ENCODE measurements at regions of chr2 and their contacts with region 1.

Region 1: GRCh38 chr2:88831792-88832248 is 140.3 kb downstream of the RPIA start:
- DNase-seq: peak; percentile 77
- ATAC-seq: peak; percentile 78
- H3K4me3 Mint-ChIP-seq: no peak overlapping the region
- H3K27ac Mint-ChIP-seq: no peak overlapping the region
- H3K4me1 Mint-ChIP-seq: no peaks in the 10 kb centered on the region
- H3K27me3 Mint-ChIP-seq: peaks cover 6% of the 10 kb centered on the region

Region 2: DNA sequence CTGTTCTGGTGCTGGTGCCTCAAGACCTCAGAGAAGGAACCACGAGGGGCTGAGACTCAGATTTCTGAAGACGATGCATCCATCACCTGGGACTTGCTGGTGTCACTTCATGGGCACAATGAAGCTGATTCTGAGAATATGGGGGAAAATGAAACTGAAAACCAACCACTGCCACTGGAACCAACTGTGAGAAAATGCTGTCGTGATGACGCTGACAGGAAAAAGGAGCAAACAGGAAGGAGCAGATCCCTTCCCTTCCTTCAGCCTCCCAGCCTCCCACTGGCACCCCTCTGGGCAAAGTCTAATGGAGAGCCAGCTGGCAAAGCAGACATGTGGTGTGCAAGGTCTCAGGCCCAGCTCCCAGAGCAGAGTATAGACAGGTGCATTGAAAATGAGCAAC is 489.1 kb before region 1 on chr2:
- CTCF ChIA-PET with region 1: no interaction called
- POLR2A ChIA-PET with region 1: no interaction called
- intact Hi-C with region 1: no loop called
- DNase-seq: no peak
- ATAC-seq: no peak
- H3K4me3 Mint-ChIP-seq: no peak overlapping the region
- H3K27ac Mint-ChIP-seq: no peak overlapping the region
- H3K4me1 Mint-ChIP-seq: peaks cover 4% of the 10 kb centered on the region
- H3K27me3 Mint-ChIP-seq: peaks cover 17% of the 10 kb centered on the region

Region 3: DNA sequence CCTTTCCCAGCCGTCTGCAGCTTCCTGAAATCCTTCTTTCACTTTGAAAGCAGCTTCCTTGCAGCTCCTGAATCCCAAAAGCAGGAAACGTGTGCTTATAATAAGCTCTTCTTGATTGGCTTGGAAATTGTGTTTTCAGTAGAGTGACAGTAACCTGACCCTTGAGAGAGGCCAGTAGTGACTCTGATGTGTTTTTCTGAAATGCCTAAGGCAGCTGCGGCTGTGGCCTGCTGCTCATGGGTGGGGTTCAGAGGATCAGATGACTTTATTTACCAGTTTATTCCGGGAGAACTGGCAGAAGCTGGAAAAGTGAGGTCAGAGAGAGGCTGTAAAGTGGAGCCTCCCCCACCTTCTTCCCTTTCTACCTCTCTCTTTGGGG is 172.3 kb before region 1 on chr2:
- CTCF ChIA-PET with region 1: no interaction called
- POLR2A ChIA-PET with region 1: no interaction called
- intact Hi-C with region 1: no loop called
- DNase-seq: no peak
- ATAC-seq: no peak
- H3K4me3 Mint-ChIP-seq: no peak overlapping the region
- H3K27ac Mint-ChIP-seq: no peak overlapping the region
- H3K4me1 Mint-ChIP-seq: no peaks in the 10 kb centered on the region
- H3K27me3 Mint-ChIP-seq: no peaks in the 10 kb centered on the region

Region 4: GRCh38 chr2:88713408-88713807 is 118.4 kb before region 1 on chr2:
- CTCF ChIA-PET with region 1: no interaction called
- POLR2A ChIA-PET with region 1: no interaction called
- intact Hi-C with region 1: no loop called
- DNase-seq: no peak
- ATAC-seq: no peak
- H3K4me3 Mint-ChIP-seq: no peak overlapping the region
- H3K27ac Mint-ChIP-seq: no peak overlapping the region
- H3K4me1 Mint-ChIP-seq: no peaks in the 10 kb centered on the region
- H3K27me3 Mint-ChIP-seq: no peaks in the 10 kb centered on the region

Region 5: DNA sequence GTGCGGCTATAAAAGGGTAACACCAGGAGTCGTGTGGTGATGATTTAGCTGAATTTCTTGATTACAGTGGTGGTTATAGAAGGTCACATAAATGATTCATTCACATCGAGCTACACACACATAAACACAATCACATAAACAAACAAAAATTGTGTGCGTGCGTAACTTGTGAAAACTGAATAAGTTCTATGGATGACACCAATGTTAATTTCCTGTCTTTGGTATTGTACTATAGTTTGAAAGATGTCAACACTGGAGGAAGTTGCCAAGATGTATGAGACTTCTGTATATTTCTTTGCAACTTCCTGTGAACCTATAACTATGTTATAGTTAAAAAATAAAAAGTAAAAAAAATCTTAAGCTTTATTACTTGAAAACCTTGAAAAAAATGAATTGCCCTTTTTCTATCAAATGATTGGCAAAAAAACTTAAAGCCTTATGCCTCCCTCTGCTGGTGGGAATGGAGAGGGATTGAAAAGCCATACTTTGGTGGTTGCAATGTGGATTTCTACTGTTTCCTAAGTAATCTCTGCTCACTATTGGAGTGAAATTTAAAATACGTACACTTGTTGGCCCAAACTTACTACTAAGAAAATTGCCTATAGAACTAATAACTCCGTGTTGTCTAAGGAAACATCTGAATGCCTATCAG is 87.4 kb after region 1 on chr2:
- CTCF ChIA-PET with region 1: interaction called, 7 read pairs
- POLR2A ChIA-PET with region 1: no interaction called
- intact Hi-C with region 1: loop called in 1 of 2 experiments (anchors 5 kb)
- DNase-seq: peak; percentile 17
- ATAC-seq: no peak
- H3K4me3 Mint-ChIP-seq: no peak overlapping the region
- H3K27ac Mint-ChIP-seq: no peak overlapping the region
- H3K4me1 Mint-ChIP-seq: peaks cover 1% of the 10 kb centered on the region
- H3K27me3 Mint-ChIP-seq: peaks cover 5% of the 10 kb centered on the region

Measured in activated CD4-positive, alpha-beta T cell treated with anti-CD3 and anti-CD28 coated beads for 36 hours (primary cell).